ENCODE measurements at regions of chr9 and their contacts with region 1.

Region 1: DNA sequence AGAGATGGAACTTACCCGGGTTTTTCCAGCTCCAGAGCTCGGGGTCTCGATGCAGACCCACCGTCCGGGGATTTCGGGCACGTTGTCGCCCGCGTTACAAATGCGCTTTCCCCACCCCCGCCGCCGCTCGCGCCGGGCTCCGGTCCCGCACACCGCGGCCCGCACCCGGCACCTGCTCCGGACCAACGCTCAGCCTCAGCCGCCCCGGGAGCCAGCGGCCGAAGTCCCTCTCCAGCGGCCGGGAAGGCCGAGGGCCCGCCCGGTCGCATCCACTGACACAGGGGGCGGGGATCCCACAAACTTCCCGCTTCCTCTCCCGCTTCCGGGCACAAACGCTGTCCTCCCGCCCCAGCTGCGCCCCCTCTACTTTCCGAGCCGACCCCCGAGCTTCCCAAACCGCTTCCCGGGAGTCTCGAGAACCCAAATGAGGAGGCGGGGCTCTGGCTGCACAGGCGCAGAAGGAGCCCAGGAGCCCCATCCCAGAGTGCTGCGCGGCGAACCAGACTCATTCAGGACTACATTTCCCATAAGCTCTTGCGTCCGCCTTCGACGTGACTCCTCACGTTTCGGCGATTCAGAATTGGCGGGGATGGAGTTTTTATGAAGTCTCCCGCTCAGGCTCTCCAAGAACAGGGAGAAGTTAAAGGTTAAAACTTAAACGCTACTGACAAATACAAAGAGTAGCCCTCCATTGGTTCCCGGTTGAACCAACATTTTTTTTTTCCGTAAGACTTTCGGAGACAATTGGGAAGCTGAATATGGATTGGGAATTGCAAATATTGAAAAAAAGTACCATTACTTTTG is at the start of gene ZNF782:
- DNase-seq: peak; percentile 96
- H3K4me3 Mint-ChIP-seq: peak within 1 kb of the TSS; percentile 87
- H3K27ac Mint-ChIP-seq: peak within 1 kb of the TSS; percentile 94
- H3K4me1 Mint-ChIP-seq: peaks cover 25% of the 10 kb centered on the region
- H3K27me3 Mint-ChIP-seq: no peaks in the 10 kb centered on the region
- CTCF ChIP-seq: no peak
- total RNA-seq, gene ZNF782: 5.2 and 6.0 TPM in 2 replicates

Region 2: GRCh38 chr9:96327694-96328352 is 526.5 kb before region 1 on chr9:
- CTCF ChIA-PET with region 1: no interaction called
- POLR2A ChIA-PET with region 1: no interaction called
- intact Hi-C with region 1: loop called (anchors 10 kb)
- DNase-seq: peak; percentile 78
- H3K4me3 Mint-ChIP-seq: no peak overlapping the region
- H3K27ac Mint-ChIP-seq: no peak overlapping the region
- H3K4me1 Mint-ChIP-seq: peaks cover 7% of the 10 kb centered on the region
- H3K27me3 Mint-ChIP-seq: no peaks in the 10 kb centered on the region
- CTCF ChIP-seq: peak; percentile 83

Region 3: DNA sequence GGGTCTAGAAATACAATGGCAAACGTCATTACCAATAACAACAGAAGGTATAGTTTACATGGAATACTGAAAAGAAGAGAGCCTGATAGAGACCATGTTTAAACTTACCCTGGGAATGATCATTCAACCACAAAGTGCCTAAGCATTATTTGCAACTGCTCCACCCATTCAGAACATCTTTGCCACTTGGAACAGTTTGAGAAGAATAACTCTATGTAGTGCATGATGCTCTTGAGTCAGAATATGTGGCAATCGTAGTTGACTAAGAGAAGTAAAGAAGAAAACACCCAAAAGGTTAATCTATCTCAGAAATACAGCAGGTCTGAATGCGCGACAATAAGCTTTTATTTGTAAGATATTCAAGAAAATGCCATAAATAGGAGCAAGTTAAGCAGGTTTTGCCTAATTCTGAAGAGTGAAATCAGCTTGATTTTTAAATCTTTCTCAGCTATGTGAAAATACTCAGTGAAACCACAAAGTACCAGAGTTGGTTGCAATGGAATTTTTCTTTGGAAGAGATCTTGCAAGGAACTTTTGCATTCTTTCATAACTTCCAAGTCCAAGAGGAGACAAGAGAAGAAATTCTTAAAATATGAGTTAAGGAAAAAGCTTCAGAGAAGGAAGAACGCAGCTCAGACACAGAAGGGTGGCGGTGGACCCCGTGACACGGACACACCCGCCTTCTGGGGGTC is 340.0 kb before region 1 on chr9:
- CTCF ChIA-PET with region 1: no interaction called
- POLR2A ChIA-PET with region 1: no interaction called
- intact Hi-C with region 1: no loop called
- DNase-seq: peak; percentile 12
- H3K4me3 Mint-ChIP-seq: no peak overlapping the region
- H3K27ac Mint-ChIP-seq: no peak overlapping the region
- H3K4me1 Mint-ChIP-seq: peaks cover 7% of the 10 kb centered on the region
- H3K27me3 Mint-ChIP-seq: no peaks in the 10 kb centered on the region
- CTCF ChIP-seq: no peak

Region 4: DNA sequence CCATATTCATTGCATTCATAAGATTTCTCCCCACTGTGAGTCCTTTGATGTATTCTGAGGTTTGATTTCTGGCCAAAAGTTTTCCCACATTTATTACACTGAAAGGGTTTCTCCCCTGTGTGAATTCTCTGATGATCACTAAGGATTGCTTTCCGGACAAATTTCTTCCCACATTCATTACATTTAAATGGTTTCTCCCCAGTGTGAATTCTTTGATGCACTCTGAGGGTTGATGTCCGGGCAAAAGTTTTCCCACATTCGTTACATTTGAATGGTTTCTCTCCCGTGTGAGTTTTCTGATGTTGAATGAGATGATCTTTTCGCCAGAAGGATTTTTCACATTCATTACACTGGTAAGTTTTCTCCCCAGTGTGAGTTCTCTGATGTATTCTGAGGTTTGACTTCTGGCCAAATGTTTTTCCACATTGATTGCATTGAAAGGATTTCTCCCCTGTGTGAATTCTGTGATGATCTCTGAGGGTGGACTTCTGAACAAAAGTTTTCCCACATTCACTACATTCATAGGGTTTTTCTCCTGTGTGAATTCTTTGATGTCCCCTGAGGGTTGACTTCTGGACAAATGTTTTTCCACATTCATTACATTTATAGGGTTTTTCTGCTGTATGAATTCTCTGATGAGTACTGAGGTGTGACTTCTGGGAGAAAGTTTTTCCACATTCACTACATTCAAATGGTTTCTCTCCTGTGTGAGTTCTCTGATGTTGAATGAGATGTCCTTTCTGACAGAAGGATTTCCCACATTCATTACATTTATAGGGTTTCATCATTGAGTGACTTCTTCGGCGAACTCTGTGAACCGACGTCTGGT is 95.2 kb before region 1 on chr9:
- CTCF ChIA-PET with region 1: no interaction called
- POLR2A ChIA-PET with region 1: no interaction called
- intact Hi-C with region 1: no loop called
- DNase-seq: peak; percentile 6
- H3K4me3 Mint-ChIP-seq: no peak overlapping the region
- H3K27ac Mint-ChIP-seq: no peak overlapping the region
- H3K4me1 Mint-ChIP-seq: no peaks in the 10 kb centered on the region
- H3K27me3 Mint-ChIP-seq: no peaks in the 10 kb centered on the region
- CTCF ChIP-seq: no peak

Region 5: DNA sequence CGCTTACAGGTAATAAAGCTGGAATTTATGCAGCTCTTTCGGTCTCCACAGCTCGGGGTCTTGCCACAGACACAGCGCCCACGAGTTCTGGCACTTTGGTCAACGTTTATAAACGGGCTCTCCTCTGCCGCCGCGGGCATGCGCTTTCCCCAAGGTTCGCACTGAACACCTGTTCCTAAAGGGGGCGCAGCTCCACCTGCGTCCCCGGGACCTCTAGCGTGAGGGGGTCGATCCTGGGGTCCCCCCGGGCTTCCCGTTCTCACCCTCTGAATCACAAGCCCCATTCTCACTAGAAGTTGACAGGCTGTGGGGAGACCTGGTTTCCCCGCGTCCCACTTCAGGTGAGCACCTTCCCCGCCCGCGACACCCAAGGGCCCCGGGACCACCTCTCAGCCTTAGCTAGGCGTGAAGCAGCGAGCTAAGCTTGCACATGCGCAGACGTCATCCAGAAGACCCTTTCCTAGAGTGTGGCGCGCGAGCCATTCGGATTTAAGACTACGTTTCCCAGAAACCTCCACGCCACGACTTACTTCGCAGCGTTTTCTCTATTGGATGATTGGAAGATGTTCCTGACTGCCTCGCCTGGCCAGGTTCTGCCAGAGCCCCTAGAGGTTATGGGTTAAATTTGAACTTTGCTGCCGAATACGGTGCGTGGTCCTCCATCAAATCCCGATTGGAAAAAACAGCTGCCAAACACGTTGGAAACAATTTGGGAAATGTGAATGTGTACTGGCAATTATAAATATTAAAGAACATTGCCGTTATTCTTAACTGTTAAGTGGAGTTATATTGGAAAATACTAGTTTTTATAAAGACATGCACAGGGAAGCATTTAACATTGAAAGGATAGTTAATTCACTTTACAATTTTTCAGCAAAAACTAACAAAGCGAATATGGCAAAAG is 21.4 kb after region 1 on chr9:
- CTCF ChIA-PET with region 1: interaction called, 81 read pairs
- POLR2A ChIA-PET with region 1: interaction called, 124 read pairs
- intact Hi-C with region 1: loop called (anchors 2 kb)
- DNase-seq: peak; percentile 87
- H3K4me3 Mint-ChIP-seq: peak overlapping the region; percentile 92
- H3K27ac Mint-ChIP-seq: peak overlapping the region; percentile 99
- H3K4me1 Mint-ChIP-seq: peaks cover 24% of the 10 kb centered on the region
- H3K27me3 Mint-ChIP-seq: no peaks in the 10 kb centered on the region
- CTCF ChIP-seq: peak; percentile 21

Region 6: GRCh38 chr9:97237951-97238851 is 383.9 kb after region 1 on chr9:
- CTCF ChIA-PET with region 1: interaction called, 13 read pairs
- POLR2A ChIA-PET with region 1: interaction called, 5 read pairs
- intact Hi-C with region 1: loop called (anchors 5 kb)
- DNase-seq: peak; percentile 84
- H3K4me3 Mint-ChIP-seq: peak overlapping the region; percentile 92
- H3K27ac Mint-ChIP-seq: peak overlapping the region; percentile 91
- H3K4me1 Mint-ChIP-seq: peaks cover 12% of the 10 kb centered on the region
- H3K27me3 Mint-ChIP-seq: no peaks in the 10 kb centered on the region
- CTCF ChIP-seq: no peak

Region 7: DNA sequence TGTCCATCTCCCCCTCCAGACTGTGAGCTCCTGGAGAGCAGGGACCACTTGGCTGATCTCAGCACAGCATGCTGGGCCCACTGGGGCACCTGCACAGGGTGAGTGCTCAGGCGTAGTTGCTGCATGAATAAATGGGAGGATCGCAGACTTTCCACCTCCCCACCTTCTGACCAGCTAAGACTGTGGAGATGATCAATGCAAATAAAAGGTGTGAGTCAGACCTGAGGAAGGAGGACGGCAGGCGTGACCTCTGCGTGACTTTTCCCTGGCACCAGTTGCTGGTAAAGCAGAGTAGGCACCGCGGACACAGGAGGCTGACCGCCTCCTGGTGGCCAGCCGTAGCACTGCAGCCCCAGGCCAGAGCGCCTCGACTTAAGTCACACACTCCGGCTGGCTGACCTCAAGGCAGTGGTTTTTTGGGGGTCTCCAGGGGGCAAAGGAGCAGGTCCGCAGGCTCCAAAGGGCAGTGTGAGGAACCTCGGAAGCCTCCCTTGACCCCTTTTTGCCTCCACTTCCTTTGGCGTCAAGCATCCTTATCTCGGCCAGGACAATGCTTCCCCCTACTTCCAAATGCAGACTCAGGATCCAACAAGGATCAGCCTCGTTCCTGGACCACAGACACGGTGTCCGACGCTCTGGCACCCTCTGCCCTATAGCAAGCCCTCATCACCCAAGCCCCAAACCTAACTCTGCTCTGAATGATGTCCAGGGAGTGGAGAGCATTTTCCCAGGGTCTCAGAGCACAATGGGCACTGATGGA is 544.9 kb after region 1 on chr9:
- CTCF ChIA-PET with region 1: interaction called, 23 read pairs
- POLR2A ChIA-PET with region 1: interaction called, 4 read pairs
- intact Hi-C with region 1: loop called (anchors 1 kb)
- DNase-seq: peak; percentile 87
- H3K4me3 Mint-ChIP-seq: no peak overlapping the region
- H3K27ac Mint-ChIP-seq: no peak overlapping the region
- H3K4me1 Mint-ChIP-seq: peaks cover 6% of the 10 kb centered on the region
- H3K27me3 Mint-ChIP-seq: no peaks in the 10 kb centered on the region
- CTCF ChIP-seq: peak; percentile 92

Region 8: DNA sequence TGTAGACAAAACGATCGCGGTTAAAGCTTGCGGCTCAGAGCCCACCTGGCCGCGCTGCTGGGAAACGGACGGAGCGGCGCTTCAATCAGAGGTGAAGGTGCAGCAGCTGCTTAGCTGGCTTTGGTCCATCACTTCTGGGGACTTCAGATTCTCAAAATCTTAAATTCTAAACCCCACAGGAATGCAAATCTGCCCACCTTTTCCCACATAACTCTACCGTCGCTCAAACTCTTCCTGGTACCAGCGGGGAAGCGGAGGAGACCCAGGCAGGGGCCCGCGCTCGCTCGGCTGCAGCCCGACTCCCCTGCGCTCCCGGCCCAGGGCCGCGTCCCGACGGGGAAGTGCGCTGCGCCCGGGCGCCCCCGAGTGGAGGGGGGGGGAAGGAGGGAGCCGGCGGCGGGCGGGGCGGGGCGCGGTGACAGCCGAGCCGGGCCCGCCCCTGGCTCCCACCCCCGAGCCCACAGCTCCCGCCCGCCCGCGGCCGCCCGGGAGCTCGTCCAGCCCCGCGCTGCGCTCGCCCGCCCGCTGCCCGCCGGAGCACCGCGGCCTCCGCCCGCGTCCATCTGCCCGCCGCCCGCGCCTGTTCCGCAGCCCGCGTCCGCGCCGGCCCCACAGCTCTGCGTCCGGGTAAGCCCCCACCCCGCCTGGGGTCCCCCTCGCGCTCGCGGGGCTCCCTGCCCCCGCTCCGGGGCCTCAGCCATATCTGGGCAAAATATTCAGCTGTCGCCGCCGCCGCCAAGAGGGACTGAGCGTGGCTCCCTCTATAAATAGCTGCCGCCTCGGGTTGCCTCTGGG is 647.1 kb after region 1 on chr9 and contains the start of gene TMOD1:
- CTCF ChIA-PET with region 1: no interaction called
- POLR2A ChIA-PET with region 1: no interaction called
- intact Hi-C with region 1: no loop called
- DNase-seq: peak; percentile 60
- H3K4me3 Mint-ChIP-seq: peak within 1 kb of the TSS; percentile 63
- H3K27ac Mint-ChIP-seq: no peak within 1 kb of the TSS
- H3K4me1 Mint-ChIP-seq: no peaks in the 10 kb centered on the region
- H3K27me3 Mint-ChIP-seq: peaks cover 19% of the 10 kb centered on the region
- CTCF ChIP-seq: peak; percentile 14
- total RNA-seq, gene TMOD1: 0.26 TPM in 1 of 2 replicates, not detected in the other